ENCODE measurements at regions of chr6 and their contacts with region 1.

Region 1: DNA sequence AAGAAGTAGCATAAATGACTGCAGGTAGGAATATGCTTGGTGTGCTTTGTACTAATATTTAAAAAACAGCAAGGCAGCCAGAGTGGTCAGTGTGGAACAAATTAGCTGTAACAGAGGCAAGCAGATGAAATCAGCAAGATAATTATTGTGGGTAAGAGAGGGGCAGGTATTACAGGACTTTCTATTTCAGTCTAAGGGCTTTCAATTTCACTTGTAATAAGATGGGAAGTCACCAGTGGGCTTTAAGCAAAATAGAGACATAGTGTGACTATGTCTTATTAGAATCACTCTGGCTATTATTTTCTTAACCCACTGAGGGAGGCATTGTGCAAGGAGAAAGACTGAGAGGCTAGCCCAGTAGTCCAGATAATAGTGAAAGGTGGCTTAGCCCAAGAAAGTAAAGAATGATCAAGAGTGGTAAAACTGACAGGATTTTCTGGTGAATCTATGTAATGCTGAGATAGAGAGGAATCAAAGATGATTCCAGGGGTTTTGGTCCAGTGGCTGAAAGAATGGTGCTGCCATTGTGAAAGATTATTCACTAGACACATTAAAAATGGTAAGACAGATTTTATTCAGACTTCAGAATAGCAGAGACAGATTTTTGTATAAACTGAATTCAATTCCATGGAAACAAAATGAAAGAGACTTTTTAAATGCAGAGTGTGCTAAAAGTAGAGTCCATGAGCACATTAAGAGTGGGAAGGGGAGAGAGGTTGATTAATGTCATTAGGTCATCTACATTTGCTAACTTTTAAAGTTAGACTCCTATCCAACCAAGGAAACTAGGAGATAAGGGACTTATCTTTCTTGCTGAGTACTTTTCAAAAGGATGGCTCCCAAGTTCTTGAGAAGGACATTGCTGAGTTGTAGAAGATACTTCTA is 1136.0 kb downstream of the HACE1 start:
- DNase-seq: no peak
- H3K4me3 ChIP-seq: no peak overlapping the region
- H3K27ac ChIP-seq: no peak overlapping the region
- H3K4me1 ChIP-seq: no peaks in the 10 kb centered on the region
- CTCF ChIP-seq: no peak

Region 2: DNA sequence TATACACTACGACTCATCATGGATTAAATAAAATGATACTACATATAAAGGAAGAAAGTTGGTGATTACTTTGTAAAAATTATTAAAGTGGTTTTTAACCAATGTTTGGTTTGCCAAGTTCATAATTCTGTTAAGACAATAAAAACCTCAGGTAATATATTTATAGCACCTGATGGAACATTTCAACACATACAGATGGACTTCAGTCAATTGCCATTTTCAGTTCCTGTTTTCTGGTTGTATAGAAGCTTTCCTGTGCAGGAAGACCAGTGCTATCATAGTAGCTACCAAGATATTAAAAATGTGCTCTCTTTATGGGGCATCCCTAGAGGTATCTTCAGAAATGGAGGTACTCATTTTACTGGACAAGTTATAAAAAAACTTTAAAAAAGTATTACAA is 643.8 kb before region 1 on chr6:
- CTCF ChIA-PET with region 1: no interaction called
- POLR2A ChIA-PET with region 1: interaction called, 10 read pairs
- intact Hi-C with region 1: no loop called
- DNase-seq: peak; percentile 86
- H3K4me3 ChIP-seq: peak overlapping the region; percentile 10
- H3K27ac ChIP-seq: peak overlapping the region; percentile 69
- H3K4me1 ChIP-seq: peaks cover 46% of the 10 kb centered on the region
- CTCF ChIP-seq: no peak

Region 3: DNA sequence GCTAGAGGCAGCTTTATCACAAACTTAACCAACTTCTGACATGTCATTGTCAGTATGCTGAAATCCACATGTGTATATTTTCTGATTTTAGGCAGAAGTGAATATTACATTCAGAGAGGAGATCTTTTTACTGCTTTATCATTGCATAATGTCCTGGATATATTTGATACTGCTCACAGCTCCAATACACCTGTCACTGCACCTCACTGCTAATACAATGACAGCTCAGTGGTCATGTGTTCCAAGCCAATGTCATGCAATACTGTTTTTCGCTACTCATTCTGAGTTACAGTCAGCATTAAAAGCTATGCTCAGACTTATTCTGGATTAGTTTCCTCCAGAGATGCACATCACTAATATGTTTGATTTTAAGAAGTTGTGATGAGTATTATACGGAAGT is 468.5 kb before region 1 on chr6:
- CTCF ChIA-PET with region 1: no interaction called
- POLR2A ChIA-PET with region 1: no interaction called
- intact Hi-C with region 1: no loop called
- DNase-seq: no peak
- H3K4me3 ChIP-seq: no peak overlapping the region
- H3K27ac ChIP-seq: no peak overlapping the region
- H3K4me1 ChIP-seq: no peaks in the 10 kb centered on the region
- CTCF ChIP-seq: no peak

Region 4: DNA sequence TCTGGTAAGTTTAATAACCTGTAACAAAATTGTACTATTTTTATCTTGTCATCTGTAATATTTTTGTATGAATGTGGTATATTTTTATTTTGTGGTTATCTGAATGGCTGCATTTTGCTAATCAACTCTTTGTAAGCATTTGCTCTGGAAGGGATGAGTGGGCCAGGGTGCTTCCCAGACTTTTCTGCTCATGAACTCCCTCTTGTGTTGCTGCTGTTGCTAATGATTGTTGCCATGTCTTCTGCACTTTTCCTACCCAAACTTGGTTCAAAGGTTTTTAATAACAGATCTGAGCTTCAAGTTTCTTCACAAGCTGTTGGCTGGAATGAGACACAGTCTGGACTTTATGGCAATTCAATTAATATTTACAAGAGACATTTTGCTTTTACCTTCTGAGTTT is 130.4 kb after region 1 on chr6:
- CTCF ChIA-PET with region 1: no interaction called
- POLR2A ChIA-PET with region 1: no interaction called
- intact Hi-C with region 1: no loop called
- DNase-seq: no peak
- H3K4me3 ChIP-seq: no peak overlapping the region
- H3K27ac ChIP-seq: no peak overlapping the region
- H3K4me1 ChIP-seq: no peaks in the 10 kb centered on the region
- CTCF ChIP-seq: no peak